ENCODE measurements at regions of chr14 and their contacts with region 1.

Region 1: GRCh38 chr14:103500148-103500990 is 22.3 kb downstream of the CKB start:
- DNase-seq: peak; percentile 98
- H3K4me3 ChIP-seq: no peak overlapping the region
- H3K27ac ChIP-seq: peak overlapping the region; percentile 64 to 65
- H3K4me1 ChIP-seq: peaks cover 7% of the 10 kb centered on the region
- H3K27me3 ChIP-seq: no peaks in the 10 kb centered on the region
- CTCF ChIP-seq: peak; percentile 93 to 96 (median 94)
- POLR2A ChIP-seq: no peak

Region 2: GRCh38 chr14:102731871-102732800 is 768.2 kb before region 1 on chr14:
- intact Hi-C with region 1: no loop called
- DNase-seq: no peak
- H3K4me3 ChIP-seq: no peak overlapping the region
- H3K27ac ChIP-seq: no peak overlapping the region
- H3K4me1 ChIP-seq: no peaks in the 10 kb centered on the region
- H3K27me3 ChIP-seq: no peaks in the 10 kb centered on the region
- CTCF ChIP-seq: no peak
- POLR2A ChIP-seq: no peak

Region 3: DNA sequence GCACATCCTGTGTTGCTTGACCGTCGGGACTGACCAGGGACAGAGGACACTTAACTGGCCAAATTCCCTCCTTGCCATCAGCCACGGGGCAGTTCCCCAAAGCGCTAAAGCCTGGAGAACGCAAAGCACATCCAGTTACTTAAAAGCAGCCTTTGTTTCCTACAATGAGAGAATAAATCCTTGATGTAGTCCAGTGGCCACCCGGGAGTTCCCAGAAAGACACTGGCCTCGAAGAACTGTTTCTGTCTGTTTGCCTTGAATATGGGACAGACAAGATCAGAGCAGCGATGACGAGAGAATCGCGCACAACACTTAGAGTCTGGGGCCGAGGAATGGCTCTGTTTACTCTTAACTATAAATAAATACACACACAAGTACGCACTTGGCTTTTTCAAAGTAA is 274.9 kb before region 1 on chr14:
- intact Hi-C with region 1: no loop called
- DNase-seq: no peak
- H3K4me3 ChIP-seq: no peak overlapping the region
- H3K27ac ChIP-seq: no peak overlapping the region
- H3K4me1 ChIP-seq: no peaks in the 10 kb centered on the region
- H3K27me3 ChIP-seq: no peaks in the 10 kb centered on the region
- CTCF ChIP-seq: no peak
- POLR2A ChIP-seq: no peak

Region 4: DNA sequence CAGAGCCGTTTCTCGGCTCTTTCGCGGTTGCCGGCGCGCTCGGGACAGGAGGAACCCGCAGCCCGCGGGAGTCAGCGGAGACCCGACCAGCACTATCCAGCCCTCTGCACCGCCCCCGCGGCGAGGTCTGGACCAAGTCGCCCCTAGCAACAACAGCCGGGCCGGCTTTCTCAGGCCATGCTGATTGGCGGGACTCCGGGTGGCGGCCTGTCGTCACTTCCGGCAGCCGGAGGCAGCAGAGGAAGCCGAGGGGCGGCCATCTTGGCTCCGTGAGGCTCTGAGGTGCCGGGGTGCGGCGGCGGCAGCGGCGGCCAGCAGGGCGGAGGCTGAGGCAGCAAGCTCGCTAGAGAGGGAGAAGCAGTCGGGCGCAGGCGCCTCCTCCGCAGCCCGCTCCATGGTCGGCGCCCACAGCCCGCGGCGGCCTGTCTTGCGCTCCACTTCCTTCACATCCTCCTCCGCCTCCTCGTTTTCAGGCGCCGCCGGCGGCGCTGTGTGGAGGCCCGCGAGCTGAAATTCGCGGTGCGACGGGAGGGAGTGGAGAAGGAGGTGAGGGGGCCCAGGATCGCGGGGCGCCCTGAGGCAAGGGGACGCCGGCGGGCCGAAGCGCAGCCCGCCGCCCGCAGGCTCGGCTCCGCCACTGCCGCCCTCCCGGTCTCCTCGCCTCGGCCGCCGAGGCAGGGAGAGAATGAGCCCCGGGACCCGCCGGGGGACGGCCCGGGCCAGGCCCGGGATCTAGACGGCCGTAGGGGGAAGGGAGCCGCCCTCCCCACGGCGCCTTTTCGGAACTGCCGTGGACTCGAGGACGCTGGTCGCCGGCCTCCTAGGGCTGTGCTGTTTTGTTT is 115.0 kb before region 1 on chr14 and contains the start of gene MARK3:
- intact Hi-C with region 1: loop called (anchors 10 kb)
- DNase-seq: peak; percentile 99
- H3K4me3 ChIP-seq: peak within 1 kb of the TSS; percentile 90 to 96
- H3K27ac ChIP-seq: peak within 1 kb of the TSS; percentile 99 to 100
- H3K4me1 ChIP-seq: peaks cover 32% of the 10 kb centered on the region
- H3K27me3 ChIP-seq: no peaks in the 10 kb centered on the region
- CTCF ChIP-seq: peak in 1 of 3 experiments; percentile 41
- POLR2A ChIP-seq: peak; percentile 89
- total RNA-seq, gene MARK3: 172 to 198 TPM

Region 5: GRCh38 chr14:103552011-103552845 is 51.9 kb after region 1 on chr14:
- intact Hi-C with region 1: loop called (anchors 10 kb)
- DNase-seq: peak; percentile 73
- H3K4me3 ChIP-seq: no peak overlapping the region
- H3K27ac ChIP-seq: peak overlapping the region; percentile 75 to 88
- H3K4me1 ChIP-seq: peaks cover 47% of the 10 kb centered on the region
- H3K27me3 ChIP-seq: no peaks in the 10 kb centered on the region
- CTCF ChIP-seq: no peak
- POLR2A ChIP-seq: no peak

Region 6: DNA sequence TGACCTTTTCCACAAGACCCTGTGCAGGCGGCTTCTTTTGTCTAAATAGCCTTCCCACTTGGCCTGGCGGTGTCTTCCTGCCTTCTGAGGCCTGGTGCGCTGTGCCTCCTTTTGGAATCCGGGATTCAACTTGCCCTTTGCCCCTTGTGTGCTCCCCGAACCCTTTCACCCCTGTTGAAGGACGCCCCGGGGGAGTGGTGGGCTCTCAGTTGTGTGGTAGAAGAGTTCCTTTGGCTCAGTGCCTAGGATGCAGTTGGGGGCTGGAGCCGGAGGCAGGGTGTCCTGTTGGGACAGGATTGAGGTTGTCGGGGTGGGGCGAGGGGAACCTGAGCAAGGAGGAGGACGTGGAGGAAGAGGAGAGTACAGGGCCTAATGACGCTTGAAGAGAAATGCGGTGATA is 163.1 kb after region 1 on chr14:
- intact Hi-C with region 1: no loop called
- DNase-seq: no peak
- H3K4me3 ChIP-seq: no peak overlapping the region
- H3K27ac ChIP-seq: peak overlapping the region; percentile 44 to 64
- H3K4me1 ChIP-seq: no peaks in the 10 kb centered on the region
- H3K27me3 ChIP-seq: no peaks in the 10 kb centered on the region
- CTCF ChIP-seq: no peak
- POLR2A ChIP-seq: no peak

Measured in testis (tissue), 5 donors.